ENCODE measurements at regions of chr6 and their contacts with region 1.

Region 1: GRCh38 chr6:133916650-133917151 is 27.8 kb downstream of the TCF21 start:
- DNase-seq: peak; percentile 91
- ATAC-seq: peak; percentile 88
- H3K4me3 ChIP-seq: no peak overlapping the region
- H3K27ac ChIP-seq: peak overlapping the region; percentile 30; the same call in 1 of the 2 replicates
- H3K4me1 ChIP-seq: peaks cover 6% of the 10 kb centered on the region; the same call in 1 of the 2 replicates
- H3K27me3 ChIP-seq: no peaks in the 10 kb centered on the region
- CTCF ChIP-seq: peak; percentile 94
- POLR2A ChIP-seq: peak; percentile 44; the same call in 1 of the 2 replicates
- RAD21 ChIP-seq: peak; percentile 95

Region 2: DNA sequence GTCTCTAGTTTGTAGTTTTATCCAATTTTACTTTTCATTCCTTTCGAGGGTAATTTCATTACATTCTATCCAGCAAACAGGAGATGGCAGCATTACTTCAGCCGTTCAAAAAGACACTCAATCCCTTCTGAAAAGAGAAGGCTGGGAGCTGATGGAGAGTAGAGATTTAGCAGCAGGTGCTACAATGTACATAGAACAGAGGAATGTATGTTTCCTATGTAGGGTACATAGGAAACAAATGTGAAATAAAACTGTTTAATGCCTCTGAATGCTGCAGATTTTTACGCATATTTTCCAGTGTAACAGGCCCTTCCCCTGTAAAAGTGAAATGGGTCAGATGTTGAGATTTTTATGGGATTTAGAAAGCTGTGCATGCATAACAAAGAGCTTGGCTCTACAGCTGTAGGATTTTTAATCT is 1086.4 kb before region 1 on chr6:
- CTCF ChIA-PET with region 1: interaction called, 3 read pairs
- POLR2A ChIA-PET with region 1: no interaction called
- dilution Hi-C with region 1: no loop called
- in situ Hi-C with region 1: loop called (anchors 10 kb)
- intact Hi-C with region 1: loop called (anchors 2 kb)
- DNase-seq: peak; percentile 59
- ATAC-seq: peak; percentile 85
- H3K4me3 ChIP-seq: no peak overlapping the region
- H3K27ac ChIP-seq: no peak overlapping the region
- H3K4me1 ChIP-seq: no peaks in the 10 kb centered on the region
- H3K27me3 ChIP-seq: no peaks in the 10 kb centered on the region
- CTCF ChIP-seq: peak; percentile 74
- POLR2A ChIP-seq: no peak
- RAD21 ChIP-seq: peak; percentile 93

Region 3: DNA sequence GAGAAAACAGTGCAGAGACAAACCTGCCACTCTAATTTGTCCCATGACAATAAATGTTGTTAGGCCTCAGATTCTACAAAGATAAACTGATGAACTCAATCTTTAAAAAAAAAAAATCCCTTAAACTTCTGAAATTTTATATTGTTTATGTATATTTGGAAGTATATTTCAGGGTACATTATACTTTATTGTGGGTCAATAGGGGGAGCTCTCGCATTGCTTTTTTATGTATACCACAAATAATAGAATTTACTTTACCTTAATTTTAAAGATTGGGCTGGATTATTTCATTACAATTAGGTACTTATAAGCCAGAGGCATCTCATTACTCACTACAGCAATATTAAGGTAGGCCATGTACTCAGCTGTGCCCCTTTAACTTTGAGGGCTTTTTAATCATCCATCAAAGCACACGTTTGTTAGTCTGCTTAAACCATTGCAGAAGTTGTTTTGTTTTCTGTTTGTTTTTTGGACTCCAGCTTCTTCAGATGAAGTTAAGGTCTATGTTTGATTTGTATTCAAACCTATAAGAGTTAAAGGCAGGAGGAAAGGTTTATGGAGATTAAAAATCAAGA is 731.8 kb before region 1 on chr6:
- CTCF ChIA-PET with region 1: no interaction called
- POLR2A ChIA-PET with region 1: no interaction called
- dilution Hi-C with region 1: no loop called
- in situ Hi-C with region 1: loop called (anchors 25 kb)
- intact Hi-C with region 1: loop called (anchors 10 kb)
- DNase-seq: peak; percentile 53
- ATAC-seq: peak; percentile 49; the same call in 1 of the 2 replicates
- H3K4me3 ChIP-seq: no peak overlapping the region
- H3K27ac ChIP-seq: no peak overlapping the region
- H3K4me1 ChIP-seq: 0 out of 2 replicates have a peak, but pooled peaks cover 2% of the 10 kb centered on the region
- H3K27me3 ChIP-seq: no peaks in the 10 kb centered on the region
- CTCF ChIP-seq: peak; percentile 70
- POLR2A ChIP-seq: no peak
- RAD21 ChIP-seq: peak; percentile 69

Region 4: GRCh38 chr6:133631421-133631820 is 285.3 kb before region 1 on chr6:
- CTCF ChIA-PET with region 1: interaction called, 3 read pairs
- POLR2A ChIA-PET with region 1: no interaction called
- dilution Hi-C with region 1: no loop called
- in situ Hi-C with region 1: no loop called
- intact Hi-C with region 1: loop called (anchors 1 kb)
- DNase-seq: peak; percentile 73
- ATAC-seq: peak; percentile 87
- H3K4me3 ChIP-seq: no peak overlapping the region
- H3K27ac ChIP-seq: peak overlapping the region; percentile 69
- H3K4me1 ChIP-seq: peaks cover 20% of the 10 kb centered on the region
- H3K27me3 ChIP-seq: no peaks in the 10 kb centered on the region
- CTCF ChIP-seq: peak; percentile 46
- POLR2A ChIP-seq: no peak
- RAD21 ChIP-seq: 0 out of 2 replicates have a peak, but pooled peaks have one; percentile 15

Measured in IMR-90 (cell line).